CD4-positive, alpha-beta memory T cell (primary cell): ENCODE measurements at regions of chr10 and their contacts with region 1.

Region 1: GRCh38 chr10:92592761-92593618 is at the start of gene KIF11:
- DNase-seq: peak; percentile 93 to 97 (median 93)
- H3K4me3 ChIP-seq: peak within 1 kb of the TSS; percentile 65 to 76
- H3K4me3 Mint-ChIP-seq: peak within 1 kb of the TSS; percentile 93 to 99 (median 98)
- H3K27ac ChIP-seq: peak within 1 kb of the TSS; percentile 85
- H3K27ac Mint-ChIP-seq: peak within 1 kb of the TSS; percentile 99 to 100 (median 100)
- H3K4me1 ChIP-seq: peaks cover 49% of the 10 kb centered on the region
- H3K4me1 Mint-ChIP-seq: peaks cover 27 to 63% (median 36%) of the 10 kb centered on the region in 4 donors
- H3K27me3 ChIP-seq: no peaks in the 10 kb centered on the region
- H3K27me3 Mint-ChIP-seq: no peaks in the 10 kb centered on the region
- total RNA-seq, gene KIF11: 2.0 to 2.1 TPM

Region 2: GRCh38 chr10:91923371-91924211 is 669.4 kb before region 1 on chr10 and contains the start of gene BTAF1:
- CTCF ChIA-PET with region 1: interaction called, 4 read pairs
- POLR2A ChIA-PET with region 1: interaction called, 8 read pairs
- intact Hi-C with region 1: loop called (anchors 5 kb)
- DNase-seq: peak; percentile 89 to 93 (median 92)
- H3K4me3 ChIP-seq: peak within 1 kb of the TSS; percentile 79 to 87
- H3K4me3 Mint-ChIP-seq: peak within 1 kb of the TSS; percentile 90 to 99 (median 94)
- H3K27ac ChIP-seq: peak within 1 kb of the TSS; percentile 91
- H3K27ac Mint-ChIP-seq: peak within 1 kb of the TSS; percentile 96 to 100 (median 99)
- H3K4me1 ChIP-seq: peaks cover 50% of the 10 kb centered on the region
- H3K4me1 Mint-ChIP-seq: peaks cover 29 to 50% (median 38%) of the 10 kb centered on the region in 4 donors
- H3K27me3 ChIP-seq: no peaks in the 10 kb centered on the region
- H3K27me3 Mint-ChIP-seq: peaks cover 2% of the 10 kb centered on the region in 2 donors
- total RNA-seq, gene BTAF1: 69.1 to 76.9 TPM

Region 3: GRCh38 chr10:92573798-92574547 is 19.0 kb before region 1 on chr10 and contains the start of gene IDE:
- CTCF ChIA-PET with region 1: interaction called, 24 read pairs
- POLR2A ChIA-PET with region 1: interaction called, 151 read pairs
- intact Hi-C with region 1: loop called (anchors 1 kb)
- DNase-seq: peak; percentile 77 to 83 (median 81)
- H3K4me3 ChIP-seq: peak within 1 kb of the TSS; percentile 50 to 86
- H3K4me3 Mint-ChIP-seq: peak within 1 kb of the TSS; percentile 88 to 95 (median 92)
- H3K27ac ChIP-seq: peak within 1 kb of the TSS; percentile 85
- H3K27ac Mint-ChIP-seq: peak within 1 kb of the TSS; percentile 90 to 96 (median 93)
- H3K4me1 ChIP-seq: peaks cover 26% of the 10 kb centered on the region
- H3K4me1 Mint-ChIP-seq: peaks cover 27 to 46% (median 36%) of the 10 kb centered on the region in 4 donors
- H3K27me3 ChIP-seq: no peaks in the 10 kb centered on the region
- H3K27me3 Mint-ChIP-seq: no peaks in the 10 kb centered on the region
- total RNA-seq, gene IDE: 38.4 to 40.2 TPM

Region 4: DNA sequence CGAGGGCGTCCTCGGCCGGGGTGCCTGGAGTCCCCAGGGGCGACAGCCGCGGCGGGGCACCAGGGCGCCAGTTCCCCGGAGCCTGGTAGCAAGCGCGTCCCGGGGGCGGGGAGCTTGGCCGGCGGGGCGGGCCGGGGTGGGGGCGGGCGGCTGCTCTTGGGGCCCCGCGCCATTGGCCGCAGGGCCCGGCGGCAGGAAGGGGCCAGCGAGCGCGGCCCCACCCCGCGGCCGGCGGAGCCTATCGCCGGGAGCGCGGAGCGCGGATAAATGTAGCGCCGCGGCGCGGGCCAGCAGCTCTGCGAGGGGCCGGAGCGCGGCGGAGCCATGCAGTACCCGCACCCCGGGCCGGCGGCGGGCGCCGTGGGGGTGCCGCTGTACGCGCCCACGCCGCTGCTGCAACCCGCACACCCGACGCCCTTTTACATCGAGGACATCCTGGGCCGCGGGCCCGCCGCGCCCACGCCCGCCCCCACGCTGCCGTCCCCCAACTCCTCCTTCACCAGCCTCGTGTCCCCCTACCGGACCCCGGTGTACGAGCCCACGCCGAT is 96.7 kb after region 1 on chr10 and contains the start of gene HHEX:
- CTCF ChIA-PET with region 1: no interaction called
- POLR2A ChIA-PET with region 1: interaction called, 4 read pairs
- intact Hi-C with region 1: loop called (anchors 5 kb)
- DNase-seq: peak in 2 of 5 donors; percentile 15 to 29
- H3K4me3 ChIP-seq: peak within 1 kb of the TSS; percentile 43 to 47
- H3K4me3 Mint-ChIP-seq: peak within 1 kb of the TSS; percentile 77 to 91 (median 86)
- H3K27ac ChIP-seq: no peak within 1 kb of the TSS
- H3K27ac Mint-ChIP-seq: peak within 1 kb of the TSS in 4 of 7 donors; percentile 13 to 84 (median 56)
- H3K4me1 ChIP-seq: peaks cover 25% of the 10 kb centered on the region
- H3K4me1 Mint-ChIP-seq: peaks cover 9 to 33% (median 26%) of the 10 kb centered on the region in 4 donors
- H3K27me3 ChIP-seq: peaks cover 37% of the 10 kb centered on the region
- H3K27me3 Mint-ChIP-seq: peaks cover 29 to 42% of the 10 kb centered on the region in 2 donors
- total RNA-seq, gene HHEX: 0.32 TPM in 1 of 2 experiments, not detected in the other

Region 5: DNA sequence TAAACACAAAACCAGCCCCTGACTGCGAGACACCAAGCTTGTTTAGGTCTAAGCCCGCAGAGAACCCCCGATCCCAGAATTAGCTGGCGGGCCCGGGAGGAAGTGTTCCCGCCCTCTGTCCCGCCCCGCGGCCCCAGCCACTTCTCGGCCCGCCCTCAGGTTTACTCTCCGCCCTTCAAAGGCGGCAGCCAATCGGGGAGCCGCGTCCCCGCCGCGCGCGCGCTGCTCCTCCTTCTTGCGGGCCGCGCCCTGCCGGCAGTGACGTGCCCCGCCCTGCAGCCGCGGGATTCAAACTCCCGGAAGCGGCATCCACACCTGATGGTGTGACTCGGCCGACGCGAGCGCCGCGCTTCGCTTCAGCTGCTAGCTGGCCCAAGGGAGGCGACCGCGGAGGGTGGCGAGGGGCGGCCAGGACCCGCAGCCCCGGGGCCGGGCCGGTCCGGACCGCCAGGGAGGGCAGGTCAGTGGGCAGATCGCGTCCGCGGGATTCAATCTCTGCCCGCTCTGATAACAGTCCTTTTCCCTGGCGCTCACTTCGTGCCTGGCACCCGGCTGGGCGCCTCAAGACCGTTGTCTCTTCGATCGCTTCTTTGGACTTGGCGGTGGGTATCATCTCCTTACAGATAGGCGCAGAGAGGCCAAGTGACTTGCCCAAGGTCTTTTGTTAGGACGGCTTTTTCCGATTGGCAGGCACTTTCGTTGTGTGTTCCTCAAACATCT is 903.5 kb after region 1 on chr10 and contains the start of gene CEP55:
- CTCF ChIA-PET with region 1: no interaction called
- POLR2A ChIA-PET with region 1: interaction called, 3 read pairs
- intact Hi-C with region 1: loop called (anchors 5 kb)
- DNase-seq: peak; percentile 93 to 97 (median 94)
- H3K4me3 ChIP-seq: peak within 1 kb of the TSS; percentile 83 to 94
- H3K4me3 Mint-ChIP-seq: peak within 1 kb of the TSS; percentile 92 to 95 (median 93)
- H3K27ac ChIP-seq: peak within 1 kb of the TSS; percentile 37
- H3K27ac Mint-ChIP-seq: peak within 1 kb of the TSS; percentile 54 to 92 (median 89)
- H3K4me1 ChIP-seq: peaks cover 23% of the 10 kb centered on the region
- H3K4me1 Mint-ChIP-seq: peaks cover 13 to 23% (median 19%) of the 10 kb centered on the region in 4 donors
- H3K27me3 ChIP-seq: no peaks in the 10 kb centered on the region
- H3K27me3 Mint-ChIP-seq: no peaks in the 10 kb centered on the region
- total RNA-seq, gene CEP55: 0.17 to 0.30 TPM